A673 (cell line): ENCODE measurements at regions of chr19 and their contacts with region 1.

Region 1: DNA sequence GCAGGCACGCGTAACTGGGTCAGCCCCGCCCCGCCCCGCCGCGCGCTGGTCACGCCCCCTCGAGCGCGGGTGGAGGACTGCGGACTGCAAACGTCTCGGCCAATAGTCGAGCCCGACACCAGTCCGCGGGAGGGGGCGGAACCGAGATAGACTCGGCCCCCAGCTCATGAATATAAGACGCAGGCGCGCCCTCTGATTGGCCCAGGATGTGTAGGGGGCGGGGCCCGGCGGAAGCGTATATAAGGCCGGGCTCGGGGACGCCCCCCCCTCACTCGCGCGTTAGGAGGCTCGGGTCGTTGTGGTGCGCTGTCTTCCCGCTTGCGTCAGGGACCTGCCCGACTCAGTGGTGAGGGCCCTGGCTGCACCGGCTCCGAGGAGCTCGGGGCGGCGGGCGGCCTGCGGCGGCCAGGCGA is at the start of gene CIRBP:
- DNase-seq: peak; percentile 99
- H3K4me3 ChIP-seq: peak within 1 kb of the TSS; percentile 58
- H3K27ac ChIP-seq: peak within 1 kb of the TSS; percentile 94
- H3K4me1 ChIP-seq: peaks cover 80% of the 10 kb centered on the region
- H3K27me3 ChIP-seq: no peaks in the 10 kb centered on the region
- CTCF ChIP-seq: no peak
- total RNA-seq, gene CIRBP: 287 and 386 TPM in 2 replicates

Region 2: GRCh38 chr19:662962-663681 is 605.9 kb before region 1 on chr19 and contains the start of gene RNF126:
- CTCF ChIA-PET with region 1: interaction called, 11 read pairs
- POLR2A ChIA-PET with region 1: no interaction called
- intact Hi-C with region 1: no loop called
- DNase-seq: peak; percentile 96
- H3K4me3 ChIP-seq: peak within 1 kb of the TSS; percentile 99
- H3K27ac ChIP-seq: peak within 1 kb of the TSS; percentile 95
- H3K4me1 ChIP-seq: peaks cover 17% of the 10 kb centered on the region
- H3K27me3 ChIP-seq: no peaks in the 10 kb centered on the region
- CTCF ChIP-seq: no peak
- total RNA-seq, gene RNF126: 90.2 and 93.3 TPM in 2 replicates

Region 3: GRCh38 chr19:901213-902081 is 367.6 kb before region 1 on chr19:
- CTCF ChIA-PET with region 1: no interaction called
- POLR2A ChIA-PET with region 1: interaction called, 14 read pairs
- intact Hi-C with region 1: no loop called
- DNase-seq: no peak
- H3K4me3 ChIP-seq: no peak overlapping the region
- H3K27ac ChIP-seq: no peak overlapping the region
- H3K4me1 ChIP-seq: peaks cover 8% of the 10 kb centered on the region
- H3K27me3 ChIP-seq: no peaks in the 10 kb centered on the region
- CTCF ChIP-seq: no peak

Region 4: GRCh38 chr19:1001538-1002166 is 267.4 kb before region 1 on chr19:
- CTCF ChIA-PET with region 1: interaction called, 6 read pairs
- POLR2A ChIA-PET with region 1: interaction called, 10 read pairs
- intact Hi-C with region 1: no loop called
- DNase-seq: peak; percentile 74
- H3K4me3 ChIP-seq: no peak overlapping the region
- H3K27ac ChIP-seq: no peak overlapping the region
- H3K4me1 ChIP-seq: peaks cover 12% of the 10 kb centered on the region
- H3K27me3 ChIP-seq: peaks cover 44% of the 10 kb centered on the region
- CTCF ChIP-seq: peak; percentile 92

Region 5: GRCh38 chr19:1177322-1178114 is 91.6 kb before region 1 on chr19:
- CTCF ChIA-PET with region 1: no interaction called
- POLR2A ChIA-PET with region 1: no interaction called
- intact Hi-C with region 1: no loop called
- DNase-seq: no peak
- H3K4me3 ChIP-seq: no peak overlapping the region
- H3K27ac ChIP-seq: no peak overlapping the region
- H3K4me1 ChIP-seq: peaks cover 22% of the 10 kb centered on the region
- H3K27me3 ChIP-seq: no peaks in the 10 kb centered on the region
- CTCF ChIP-seq: peak; percentile 26; the same call in 1 of the 2 replicates

Region 6: DNA sequence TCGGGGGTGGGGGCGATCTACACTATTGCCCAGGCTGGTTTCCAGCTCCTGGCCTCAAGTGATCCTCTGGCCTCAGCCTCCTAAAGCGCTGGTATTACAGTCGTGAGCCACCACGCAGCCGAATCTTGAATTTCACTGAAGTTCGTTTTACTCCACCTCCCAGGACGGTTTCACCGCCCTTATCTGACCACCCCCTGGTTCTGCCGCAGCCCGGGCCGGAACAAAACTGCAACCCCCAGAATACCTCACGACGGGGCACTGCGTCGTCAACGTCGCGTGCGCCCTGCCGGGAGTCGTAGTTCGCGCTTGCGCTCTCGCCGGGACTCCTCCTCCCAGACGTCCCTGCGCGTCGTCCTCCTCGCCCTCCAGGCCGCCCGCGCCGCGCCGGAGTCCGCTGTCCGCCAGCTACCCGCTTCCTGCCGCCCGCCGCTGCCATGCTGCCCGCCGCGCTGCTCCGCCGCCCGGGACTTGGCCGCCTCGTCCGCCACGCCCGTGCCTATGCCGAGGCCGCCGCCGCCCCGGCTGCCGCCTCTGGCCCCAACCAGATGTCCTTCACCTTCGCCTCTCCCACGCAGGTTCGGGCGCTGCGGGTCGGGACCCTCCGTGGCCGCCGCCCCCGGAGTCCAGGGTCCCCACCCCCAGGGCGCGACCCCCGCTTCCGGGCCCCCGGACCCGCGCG is 27.5 kb before region 1 on chr19 and contains the start of gene ATP5F1D:
- CTCF ChIA-PET with region 1: interaction called, 149 read pairs
- POLR2A ChIA-PET with region 1: interaction called, 36 read pairs
- intact Hi-C with region 1: no loop called
- DNase-seq: peak; percentile 97
- H3K4me3 ChIP-seq: peak within 1 kb of the TSS; percentile 98
- H3K27ac ChIP-seq: peak within 1 kb of the TSS; percentile 95
- H3K4me1 ChIP-seq: peaks cover 49% of the 10 kb centered on the region
- H3K27me3 ChIP-seq: no peaks in the 10 kb centered on the region
- CTCF ChIP-seq: no peak
- total RNA-seq, gene ATP5F1D: 237 and 250 TPM in 2 replicates

Region 7: GRCh38 chr19:1249298-1249989 is 19.6 kb before region 1 on chr19:
- CTCF ChIA-PET with region 1: interaction called, 149 read pairs
- POLR2A ChIA-PET with region 1: interaction called, 36 read pairs
- intact Hi-C with region 1: loop called (anchors 2 kb)
- DNase-seq: peak; percentile 98
- H3K4me3 ChIP-seq: peak overlapping the region; percentile 96
- H3K27ac ChIP-seq: peak overlapping the region; percentile 99
- H3K4me1 ChIP-seq: peaks cover 25% of the 10 kb centered on the region
- H3K27me3 ChIP-seq: no peaks in the 10 kb centered on the region
- CTCF ChIP-seq: no peak

Region 8: DNA sequence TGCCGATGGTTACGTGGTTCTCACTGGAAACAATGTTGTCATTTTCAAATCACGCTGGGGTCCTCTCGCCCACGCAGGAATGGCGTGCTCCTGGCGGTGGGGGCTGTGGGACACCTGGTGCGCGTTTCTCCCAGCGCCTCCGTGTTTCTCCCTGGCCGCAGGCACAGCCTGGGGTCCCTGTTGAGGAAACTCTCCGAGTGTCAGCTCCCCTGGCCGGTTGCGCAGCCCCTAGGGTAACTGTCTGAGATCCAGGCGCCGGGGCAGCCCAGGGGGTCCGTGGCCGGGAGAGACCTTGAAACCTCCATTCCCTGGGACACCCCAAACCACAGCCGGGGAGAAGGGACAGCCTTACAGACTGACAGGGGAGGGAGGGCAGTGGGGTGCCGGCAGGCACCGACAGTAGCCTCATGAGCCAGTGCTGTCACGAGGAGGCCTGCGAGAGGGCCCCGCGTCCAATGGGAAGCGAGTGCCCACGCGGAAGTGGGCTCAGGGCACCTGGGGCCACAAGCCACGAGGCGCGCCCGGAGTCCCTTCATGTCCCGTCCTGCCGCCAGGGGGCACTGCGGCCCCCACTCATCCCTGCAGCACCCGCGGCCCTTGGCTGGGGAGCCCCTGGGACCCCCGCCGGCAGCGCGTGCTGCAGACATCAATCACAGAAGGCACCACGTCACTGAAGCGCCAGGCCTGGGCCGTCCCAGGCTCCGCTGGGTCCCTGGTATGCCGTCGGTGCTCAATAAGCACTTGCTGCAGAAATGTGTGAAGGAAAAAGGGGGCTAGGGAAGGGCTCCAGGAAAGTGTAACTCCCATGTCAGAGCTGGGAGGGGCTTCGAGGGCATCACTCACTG is 234.2 kb after region 1 on chr19:
- CTCF ChIA-PET with region 1: no interaction called
- POLR2A ChIA-PET with region 1: no interaction called
- intact Hi-C with region 1: no loop called
- DNase-seq: peak; percentile 84
- H3K4me3 ChIP-seq: peak overlapping the region; percentile 40
- H3K27ac ChIP-seq: peak overlapping the region; percentile 41
- H3K4me1 ChIP-seq: peaks cover 18% of the 10 kb centered on the region
- H3K27me3 ChIP-seq: no peaks in the 10 kb centered on the region
- CTCF ChIP-seq: peak; percentile 93

Region 9: DNA sequence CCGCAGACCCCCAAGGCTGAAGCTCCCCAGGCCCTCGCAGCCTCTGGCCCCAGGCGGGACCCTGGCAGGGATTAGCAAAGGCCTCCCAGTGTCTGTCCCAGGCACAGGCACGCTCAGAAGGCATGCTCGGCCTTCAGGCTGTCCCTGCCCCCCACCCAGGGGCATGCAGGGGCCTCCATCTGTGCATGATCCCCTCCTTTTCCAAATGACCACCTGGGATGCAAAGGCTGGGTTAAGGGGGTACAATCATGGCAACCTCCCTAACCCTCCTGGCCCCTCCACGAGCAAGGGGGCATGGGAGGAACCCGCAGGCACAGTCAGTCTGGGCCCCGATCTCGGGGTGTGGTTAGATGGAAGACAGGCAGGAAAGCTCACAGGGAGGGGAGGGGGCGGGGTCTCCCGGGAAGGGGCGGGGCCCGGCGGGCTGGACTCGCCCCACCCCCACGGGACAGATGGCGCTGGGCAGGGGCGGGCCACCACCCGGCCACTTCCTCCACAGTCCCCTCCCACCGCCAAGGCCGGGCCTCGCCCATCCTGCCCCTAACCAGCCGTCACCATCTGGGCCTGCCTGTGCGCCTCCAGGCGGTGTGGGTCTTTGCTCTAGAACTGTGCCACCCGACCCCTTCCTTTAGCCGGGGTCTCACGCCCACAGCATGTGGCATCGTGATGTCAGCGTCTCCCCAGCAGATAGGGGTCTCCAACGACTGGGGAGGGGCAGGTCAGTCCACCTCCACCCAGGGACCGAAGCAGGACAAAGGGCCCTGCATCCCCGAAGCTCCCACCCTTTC is 586.2 kb after region 1 on chr19:
- CTCF ChIA-PET with region 1: no interaction called
- POLR2A ChIA-PET with region 1: no interaction called
- intact Hi-C with region 1: loop called (anchors 5 kb)
- DNase-seq: peak; percentile 89
- H3K4me3 ChIP-seq: peak overlapping the region; percentile 43
- H3K27ac ChIP-seq: peak overlapping the region; percentile 80
- H3K4me1 ChIP-seq: peaks cover 86% of the 10 kb centered on the region
- H3K27me3 ChIP-seq: no peaks in the 10 kb centered on the region
- CTCF ChIP-seq: no peak